ENCODE measurements at regions of chr17 and their contacts with region 1.

Region 1: DNA sequence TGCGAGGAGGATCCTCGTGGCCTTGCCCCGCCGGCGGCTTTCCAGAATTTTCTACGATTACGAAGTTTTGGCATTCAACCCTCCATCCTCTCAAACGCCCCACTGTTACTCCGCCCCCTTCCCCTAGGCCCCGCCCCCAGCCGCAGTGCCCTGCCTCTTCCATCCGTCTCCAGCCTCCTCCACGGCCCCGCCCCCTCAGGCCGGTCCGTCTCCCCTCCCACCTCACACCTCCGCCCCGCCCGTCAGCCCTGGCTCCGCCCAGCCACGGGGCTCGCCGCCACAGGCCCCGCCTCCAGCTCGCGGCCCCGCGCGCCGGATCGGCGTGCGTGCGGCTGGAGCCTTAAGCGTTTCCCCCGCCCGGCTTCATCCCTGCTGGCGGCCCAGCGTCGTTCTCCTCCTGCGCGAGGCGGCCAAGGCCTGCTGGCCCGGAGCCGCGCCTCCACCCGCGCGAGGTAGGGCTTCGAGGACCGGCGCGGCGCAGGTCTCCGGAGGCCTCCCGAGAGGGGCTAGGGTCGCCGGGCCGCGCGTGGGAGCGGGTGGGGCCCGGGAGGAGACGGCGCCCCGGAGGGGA is at the starts of genes C17orf67 and DGKE:
- DNase-seq: peak; percentile 99
- H3K4me3 Mint-ChIP-seq: peak within 1 kb of the TSS; percentile 93
- H3K27ac Mint-ChIP-seq: peak within 1 kb of the TSS; percentile 94
- H3K4me1 Mint-ChIP-seq: peaks cover 64% of the 10 kb centered on the region
- H3K27me3 Mint-ChIP-seq: no peaks in the 10 kb centered on the region
- total RNA-seq, gene C17orf67: 4.1 to 4.2 TPM
- total RNA-seq, gene DGKE: 34.2 to 35.7 TPM

Region 2: GRCh38 chr17:56798908-56799307 is 35.0 kb before region 1 on chr17:
- CTCF ChIA-PET with region 1: no interaction called
- POLR2A ChIA-PET with region 1: no interaction called
- DNase-seq: no peak
- H3K4me3 Mint-ChIP-seq: no peak overlapping the region
- H3K27ac Mint-ChIP-seq: no peak overlapping the region
- H3K4me1 Mint-ChIP-seq: no peaks in the 10 kb centered on the region
- H3K27me3 Mint-ChIP-seq: no peaks in the 10 kb centered on the region

Region 3: GRCh38 chr17:56819431-56820145 is 14.3 kb before region 1 on chr17:
- CTCF ChIA-PET with region 1: interaction called, 15 read pairs
- POLR2A ChIA-PET with region 1: interaction called, 14 read pairs
- DNase-seq: peak; percentile 74
- H3K4me3 Mint-ChIP-seq: no peak overlapping the region
- H3K27ac Mint-ChIP-seq: no peak overlapping the region
- H3K4me1 Mint-ChIP-seq: peaks cover 11% of the 10 kb centered on the region
- H3K27me3 Mint-ChIP-seq: no peaks in the 10 kb centered on the region

Region 4: GRCh38 chr17:56851008-56851407 is 17.1 kb after region 1 on chr17:
- CTCF ChIA-PET with region 1: interaction called, 4 read pairs
- POLR2A ChIA-PET with region 1: interaction called, 10 read pairs
- DNase-seq: no peak
- H3K4me3 Mint-ChIP-seq: no peak overlapping the region
- H3K27ac Mint-ChIP-seq: no peak overlapping the region
- H3K4me1 Mint-ChIP-seq: no peaks in the 10 kb centered on the region
- H3K27me3 Mint-ChIP-seq: no peaks in the 10 kb centered on the region

Region 5: DNA sequence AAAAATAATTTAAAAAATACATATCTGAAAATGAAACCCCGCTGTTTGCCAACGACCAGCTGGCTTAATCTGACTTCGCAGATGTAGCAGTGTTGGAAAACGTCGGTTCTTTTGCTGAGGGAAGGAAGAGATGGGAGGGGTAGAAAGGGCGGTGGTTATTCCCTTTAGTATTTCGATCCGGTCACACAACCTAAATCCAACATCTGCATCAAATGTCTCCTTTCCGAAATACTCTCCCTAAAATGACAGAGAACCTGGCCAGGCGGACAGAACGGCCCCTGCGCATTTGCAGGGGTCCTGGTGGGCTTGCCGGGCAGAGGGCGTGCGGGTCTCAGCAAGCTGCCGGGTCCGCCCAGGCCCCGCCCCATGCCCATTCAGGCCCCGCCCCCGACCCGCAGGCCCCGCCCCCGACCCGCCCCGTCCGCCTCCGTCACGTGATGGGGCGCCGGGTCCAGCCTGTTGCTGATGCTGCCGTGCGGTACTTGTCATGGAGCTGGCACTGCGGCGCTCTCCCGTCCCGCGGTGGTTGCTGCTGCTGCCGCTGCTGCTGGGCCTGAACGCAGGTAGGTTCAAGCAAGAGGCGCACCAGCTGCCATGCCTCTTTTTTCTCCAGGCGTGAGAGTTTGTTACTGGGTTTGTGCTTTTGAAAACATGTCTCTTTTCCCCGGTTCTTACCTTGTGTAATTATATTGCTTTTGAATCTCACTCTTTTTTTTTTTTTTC is 143.9 kb after region 1 on chr17 and contains the start of gene SCPEP1:
- CTCF ChIA-PET with region 1: no interaction called
- POLR2A ChIA-PET with region 1: interaction called, 12 read pairs
- DNase-seq: peak; percentile 86
- H3K4me3 Mint-ChIP-seq: peak within 1 kb of the TSS; percentile 85
- H3K27ac Mint-ChIP-seq: peak within 1 kb of the TSS; percentile 80
- H3K4me1 Mint-ChIP-seq: peaks cover 25% of the 10 kb centered on the region
- H3K27me3 Mint-ChIP-seq: peaks cover 19% of the 10 kb centered on the region
- total RNA-seq, gene SCPEP1: 25.0 to 27.1 TPM

Region 6: DNA sequence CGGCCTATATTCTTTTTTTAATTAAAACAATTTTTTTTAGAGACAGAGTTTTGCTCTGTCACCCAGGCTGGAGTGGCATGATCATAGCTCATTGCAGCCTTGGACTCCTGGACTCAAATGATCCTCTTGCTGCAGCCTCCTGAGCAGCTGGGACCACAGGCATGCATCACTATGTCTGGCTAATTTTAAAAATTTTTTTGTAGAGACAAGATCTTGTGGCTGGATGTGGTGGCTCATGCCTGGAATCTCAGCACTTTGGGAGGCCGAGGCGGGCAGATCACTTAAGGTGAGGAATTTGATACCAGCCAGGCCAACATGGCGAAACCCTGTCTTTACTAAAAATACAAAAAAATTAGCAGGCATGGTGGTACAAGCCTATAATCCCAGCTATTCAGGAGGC is 367.6 kb after region 1 on chr17:
- CTCF ChIA-PET with region 1: no interaction called
- POLR2A ChIA-PET with region 1: no interaction called
- DNase-seq: no peak
- H3K4me3 Mint-ChIP-seq: no peak overlapping the region
- H3K27ac Mint-ChIP-seq: no peak overlapping the region
- H3K4me1 Mint-ChIP-seq: no peaks in the 10 kb centered on the region
- H3K27me3 Mint-ChIP-seq: peaks cover 16% of the 10 kb centered on the region

Measured in activated CD4-positive, alpha-beta memory T cell treated with anti-CD3 and anti-CD28 coated beads, Interleukin-2, amount 10 ng/mL, durations not matched to agents 7 days and 5 days (primary cell).